Caco-2 (cell line): ENCODE measurements at regions of chr6 and their contacts with region 1.

Region 1: DNA sequence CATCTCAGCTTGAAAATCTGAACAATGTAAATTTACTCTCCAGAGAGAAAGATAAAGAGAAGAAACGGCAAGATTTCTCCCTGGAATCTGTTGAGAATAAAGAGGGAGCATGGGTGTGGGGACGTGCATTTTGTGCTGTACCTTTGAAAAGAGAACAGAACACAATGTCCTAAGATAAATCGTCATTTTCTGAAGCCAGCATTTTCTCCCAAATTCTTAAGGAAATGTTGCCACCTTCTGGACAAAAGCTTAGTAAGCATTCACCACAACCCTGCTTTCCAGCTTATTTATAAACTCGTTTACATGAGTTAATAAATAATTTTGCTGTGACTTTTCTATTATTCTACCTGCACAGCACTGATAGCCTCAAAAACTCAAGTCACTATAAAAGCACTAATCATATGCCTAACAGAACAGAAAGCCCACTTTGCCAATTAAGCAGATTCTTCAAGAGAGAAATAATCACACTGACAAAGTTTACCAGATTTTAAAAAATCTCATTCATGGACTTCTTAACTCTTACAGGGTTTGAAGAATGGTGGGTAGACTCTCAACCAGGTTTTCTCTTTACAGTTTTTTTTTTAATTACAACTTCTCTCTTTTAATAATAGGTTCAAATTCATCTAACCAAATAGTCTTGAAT is 155.8 kb downstream of the MBOAT1 start:
- DNase-seq: peak in 1 of 2 experiments; percentile 31
- H3K4me3 ChIP-seq: no peak overlapping the region
- H3K4me3 Mint-ChIP-seq: no peak overlapping the region
- H3K27ac Mint-ChIP-seq: no peak overlapping the region
- H3K4me1 ChIP-seq: no peaks in the 10 kb centered on the region
- H3K4me1 Mint-ChIP-seq: no peaks in the 10 kb centered on the region
- H3K27me3 ChIP-seq: no peaks in the 10 kb centered on the region
- H3K27me3 Mint-ChIP-seq: peaks cover 12% of the 10 kb centered on the region
- CTCF ChIP-seq: peak; percentile 32 to 35

Region 2: DNA sequence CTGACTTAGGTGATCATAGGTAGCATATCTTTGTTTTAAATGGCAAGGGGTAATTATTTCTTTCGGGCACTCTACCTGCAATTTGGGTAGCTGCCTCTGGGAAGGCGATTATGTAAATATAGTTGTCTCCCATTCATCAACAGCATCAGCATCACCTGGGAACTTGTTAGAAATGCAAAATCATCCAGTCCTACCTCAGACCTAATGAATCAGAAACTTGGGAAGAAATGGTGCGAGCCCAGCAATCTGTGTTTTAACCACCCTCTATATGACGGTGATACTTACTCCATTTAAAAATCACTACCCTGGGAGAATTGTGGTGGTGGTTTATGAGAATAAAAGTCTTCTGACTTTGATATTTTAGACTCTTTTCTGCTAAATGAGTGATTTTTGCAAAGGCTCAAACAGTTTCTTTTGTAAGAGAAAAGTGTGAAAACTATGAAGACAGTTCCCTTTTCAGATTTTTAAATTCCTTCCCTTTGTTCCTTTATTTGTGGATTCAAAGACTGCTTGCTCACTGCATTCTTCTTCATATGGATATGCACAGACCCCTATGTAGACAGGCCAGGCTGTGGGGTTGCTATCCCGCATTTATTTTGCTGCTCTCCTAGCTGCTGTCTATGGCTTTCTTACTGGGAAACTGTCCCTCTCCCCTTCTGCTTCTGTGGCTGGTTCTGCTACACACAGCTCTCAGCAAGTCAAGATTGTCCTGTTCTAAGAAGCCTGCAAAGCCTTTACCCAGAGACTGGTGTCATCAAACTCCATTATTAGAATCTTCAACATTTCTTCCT is 1304.0 kb before region 1 on chr6:
- CTCF ChIA-PET with region 1: no interaction called
- POLR2A ChIA-PET with region 1: no interaction called
- intact Hi-C with region 1: loop called (anchors 5 kb)
- DNase-seq: no peak
- H3K4me3 ChIP-seq: no peak overlapping the region
- H3K4me3 Mint-ChIP-seq: no peak overlapping the region
- H3K27ac Mint-ChIP-seq: no peak overlapping the region
- H3K4me1 ChIP-seq: no peaks in the 10 kb centered on the region
- H3K4me1 Mint-ChIP-seq: peaks cover 7% of the 10 kb centered on the region
- H3K27me3 ChIP-seq: no peaks in the 10 kb centered on the region
- H3K27me3 Mint-ChIP-seq: peaks cover 18% of the 10 kb centered on the region
- CTCF ChIP-seq: no peak

Region 3: GRCh38 chr6:19549113-19549512 is 507.4 kb before region 1 on chr6:
- CTCF ChIA-PET with region 1: no interaction called
- POLR2A ChIA-PET with region 1: no interaction called
- intact Hi-C with region 1: loop called (anchors 5 kb)
- DNase-seq: no peak
- H3K4me3 ChIP-seq: no peak overlapping the region
- H3K4me3 Mint-ChIP-seq: no peak overlapping the region
- H3K27ac Mint-ChIP-seq: no peak overlapping the region
- H3K4me1 ChIP-seq: no peaks in the 10 kb centered on the region
- H3K4me1 Mint-ChIP-seq: no peaks in the 10 kb centered on the region
- H3K27me3 ChIP-seq: no peaks in the 10 kb centered on the region
- H3K27me3 Mint-ChIP-seq: no peaks in the 10 kb centered on the region
- CTCF ChIP-seq: no peak

Region 4: GRCh38 chr6:19824058-19824807 is 232.2 kb before region 1 on chr6:
- CTCF ChIA-PET with region 1: no interaction called
- POLR2A ChIA-PET with region 1: no interaction called
- intact Hi-C with region 1: no loop called
- DNase-seq: no peak
- H3K4me3 ChIP-seq: no peak overlapping the region
- H3K4me3 Mint-ChIP-seq: no peak overlapping the region
- H3K27ac Mint-ChIP-seq: no peak overlapping the region
- H3K4me1 ChIP-seq: no peaks in the 10 kb centered on the region
- H3K4me1 Mint-ChIP-seq: no peaks in the 10 kb centered on the region
- H3K27me3 ChIP-seq: no peaks in the 10 kb centered on the region
- H3K27me3 Mint-ChIP-seq: peaks cover 13% of the 10 kb centered on the region
- CTCF ChIP-seq: no peak

Region 5: GRCh38 chr6:19851241-19852089 is 205.0 kb before region 1 on chr6:
- CTCF ChIA-PET with region 1: no interaction called
- POLR2A ChIA-PET with region 1: no interaction called
- intact Hi-C with region 1: loop called (anchors 1 kb)
- DNase-seq: peak; percentile 45 to 54
- H3K4me3 ChIP-seq: no peak overlapping the region
- H3K4me3 Mint-ChIP-seq: no peak overlapping the region
- H3K27ac Mint-ChIP-seq: no peak overlapping the region
- H3K4me1 ChIP-seq: no peaks in the 10 kb centered on the region
- H3K4me1 Mint-ChIP-seq: no peaks in the 10 kb centered on the region
- H3K27me3 ChIP-seq: no peaks in the 10 kb centered on the region
- H3K27me3 Mint-ChIP-seq: peaks cover 9% of the 10 kb centered on the region
- CTCF ChIP-seq: peak; percentile 70 to 75

Region 6: DNA sequence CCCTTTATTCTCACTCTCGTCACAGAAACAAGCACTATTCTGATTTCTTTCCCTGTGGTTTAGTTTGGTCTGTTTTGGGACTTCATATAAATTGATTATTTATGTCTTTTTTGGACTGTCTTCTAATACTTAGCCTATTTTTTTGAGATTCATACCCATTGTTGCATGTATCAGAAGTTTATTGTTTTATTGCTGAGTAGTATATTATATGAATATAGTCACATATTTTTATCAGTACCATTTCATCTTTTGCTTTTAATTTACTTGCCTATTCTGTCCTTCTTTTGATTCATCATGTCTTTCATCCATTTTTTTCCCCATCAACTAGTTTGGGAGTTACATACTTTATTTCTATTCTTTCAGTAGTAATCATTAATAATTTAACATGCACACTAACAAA is 107.3 kb before region 1 on chr6:
- CTCF ChIA-PET with region 1: no interaction called
- POLR2A ChIA-PET with region 1: no interaction called
- intact Hi-C with region 1: no loop called
- DNase-seq: no peak
- H3K4me3 ChIP-seq: no peak overlapping the region
- H3K4me3 Mint-ChIP-seq: no peak overlapping the region
- H3K27ac Mint-ChIP-seq: no peak overlapping the region
- H3K4me1 ChIP-seq: no peaks in the 10 kb centered on the region
- H3K4me1 Mint-ChIP-seq: no peaks in the 10 kb centered on the region
- H3K27me3 ChIP-seq: no peaks in the 10 kb centered on the region
- H3K27me3 Mint-ChIP-seq: peaks cover 14% of the 10 kb centered on the region
- CTCF ChIP-seq: no peak

Region 7: DNA sequence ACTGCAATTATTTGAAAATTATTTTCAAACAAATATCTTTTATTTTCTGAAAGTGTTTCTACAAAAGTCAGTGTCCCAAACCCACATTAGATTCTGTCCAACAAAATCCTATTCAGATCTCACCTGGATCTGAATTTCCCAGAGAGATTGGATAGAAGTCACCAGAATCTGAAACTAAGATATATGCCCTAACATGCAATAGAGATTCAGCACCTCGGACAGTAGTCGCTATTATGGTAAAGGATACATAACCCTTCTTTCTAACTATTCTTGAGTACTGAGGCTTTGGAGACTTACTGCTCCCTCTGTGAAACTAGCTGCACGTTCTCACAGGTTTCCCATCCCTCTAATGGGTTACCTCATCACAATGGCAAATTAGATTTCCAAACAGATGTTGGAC is 67.9 kb before region 1 on chr6:
- CTCF ChIA-PET with region 1: no interaction called
- POLR2A ChIA-PET with region 1: no interaction called
- intact Hi-C with region 1: loop called (anchors 5 kb)
- DNase-seq: peak in 1 of 2 experiments; percentile 14
- H3K4me3 ChIP-seq: no peak overlapping the region
- H3K4me3 Mint-ChIP-seq: no peak overlapping the region
- H3K27ac Mint-ChIP-seq: no peak overlapping the region
- H3K4me1 ChIP-seq: no peaks in the 10 kb centered on the region
- H3K4me1 Mint-ChIP-seq: no peaks in the 10 kb centered on the region
- H3K27me3 ChIP-seq: no peaks in the 10 kb centered on the region
- H3K27me3 Mint-ChIP-seq: peaks cover 7% of the 10 kb centered on the region
- CTCF ChIP-seq: no peak

Region 8: GRCh38 chr6:20188630-20189075 is 132.2 kb after region 1 on chr6:
- CTCF ChIA-PET with region 1: no interaction called
- POLR2A ChIA-PET with region 1: no interaction called
- intact Hi-C with region 1: no loop called
- DNase-seq: no peak
- H3K4me3 ChIP-seq: no peak overlapping the region
- H3K4me3 Mint-ChIP-seq: no peak overlapping the region
- H3K27ac Mint-ChIP-seq: no peak overlapping the region
- H3K4me1 ChIP-seq: peaks cover 7% of the 10 kb centered on the region
- H3K4me1 Mint-ChIP-seq: peaks cover 8% of the 10 kb centered on the region
- H3K27me3 ChIP-seq: no peaks in the 10 kb centered on the region
- H3K27me3 Mint-ChIP-seq: no peaks in the 10 kb centered on the region
- CTCF ChIP-seq: no peak